GM13977 (cell line): ENCODE measurements at regions of chr12 and their contacts with region 1.

Region 1: GRCh38 chr12:50167041-50167828 is at the start of gene CERS5:
- DNase-seq: peak; percentile 99
- CTCF ChIP-seq: peak; percentile 2

Region 2: GRCh38 chr12:49866859-49867579 is 300.2 kb before region 1 on chr12:
- in situ Hi-C with region 1: no loop called
- DNase-seq: peak; percentile 93
- CTCF ChIP-seq: peak; percentile 94

Region 3: DNA sequence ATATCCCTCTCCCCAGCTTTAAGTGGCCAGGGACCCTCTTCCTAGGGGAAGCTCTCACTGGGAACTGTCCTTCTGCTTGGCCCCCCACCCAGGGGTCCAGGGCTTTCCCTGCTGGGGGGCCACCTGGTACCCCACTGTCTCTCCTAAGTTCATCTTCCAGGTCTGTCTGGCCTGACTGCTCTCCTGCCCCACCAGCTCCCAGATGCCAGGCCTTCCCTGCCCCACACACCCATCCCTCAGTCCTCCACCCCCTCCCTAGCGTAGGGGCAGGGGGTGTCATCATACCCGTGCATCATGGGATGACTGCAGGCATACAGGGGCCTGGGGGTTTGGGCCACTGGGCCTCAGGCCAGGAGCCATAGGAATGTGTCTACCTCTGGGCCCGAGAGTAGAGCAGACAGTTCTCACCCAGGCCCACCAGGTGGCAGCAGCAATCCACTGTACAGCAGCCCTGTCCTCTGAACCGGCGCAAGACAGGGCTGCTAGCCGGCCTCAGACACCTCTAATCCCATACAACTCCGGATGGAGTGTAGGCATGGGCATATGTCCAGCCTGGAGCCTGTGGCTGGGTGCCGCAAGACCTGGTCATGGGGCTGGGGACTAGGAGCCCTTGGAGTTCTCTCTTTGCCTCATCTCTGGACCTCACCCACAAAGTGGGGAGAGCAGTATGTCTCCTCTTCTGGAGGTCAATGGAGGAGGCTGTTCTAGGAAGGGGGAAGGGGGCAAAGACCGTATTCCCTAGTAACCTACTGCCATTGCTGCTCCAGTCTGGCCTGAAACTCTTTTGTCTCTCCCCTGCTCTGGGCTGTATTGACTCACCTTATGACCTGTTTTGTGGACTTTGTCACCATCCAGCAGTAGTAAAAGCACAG is 92.1 kb before region 1 on chr12:
- in situ Hi-C with region 1: loop called (anchors 10 kb)
- DNase-seq: peak; percentile 88
- CTCF ChIP-seq: peak; percentile 91

Region 4: GRCh38 chr12:50099302-50100008 is 67.8 kb before region 1 on chr12:
- in situ Hi-C with region 1: no loop called
- DNase-seq: no peak
- CTCF ChIP-seq: no peak